CD4-positive, alpha-beta memory T cell (primary cell): ENCODE measurements at regions of chr12 and their contacts with region 1.

Region 1: DNA sequence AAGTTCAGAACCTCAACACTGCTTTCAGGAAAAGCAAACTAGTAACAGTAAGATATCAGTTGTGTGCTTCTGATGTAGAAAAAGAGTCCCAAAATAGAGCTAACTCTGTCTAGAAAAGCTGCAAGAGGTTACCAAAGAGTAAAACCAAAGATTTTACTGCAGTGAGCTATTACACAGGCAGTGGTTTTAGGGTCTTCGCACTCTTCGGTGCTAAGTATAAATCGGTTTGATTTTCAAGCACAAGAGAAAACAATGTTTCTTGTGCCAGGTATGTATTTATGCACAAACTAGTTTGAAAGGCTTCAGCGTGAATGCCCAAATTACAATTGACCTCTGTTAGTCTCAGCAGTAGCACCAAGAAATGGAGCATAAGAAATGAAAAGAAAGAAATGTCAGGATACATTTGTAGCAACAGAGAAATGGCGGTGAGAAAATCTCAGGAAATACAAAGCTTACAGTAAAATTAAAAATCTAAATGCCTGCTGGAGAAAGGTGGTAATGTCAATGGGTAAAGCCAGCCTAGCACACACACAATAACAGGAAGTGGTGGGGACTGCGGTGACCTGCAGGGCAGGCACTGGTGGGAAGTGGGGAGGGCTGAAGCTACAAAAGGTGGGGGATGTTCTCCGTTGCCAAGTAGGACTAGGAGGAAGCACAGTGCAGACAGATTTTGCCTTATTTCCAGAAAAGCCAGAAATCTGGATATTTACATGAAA is 18.0 kb upstream of the DYRK2 start:
- DNase-seq: peak; percentile 91 to 96 (median 92)
- H3K4me3 ChIP-seq: no peak overlapping the region
- H3K4me3 Mint-ChIP-seq: peak overlapping the region; percentile 61 to 88 (median 74)
- H3K27ac ChIP-seq: peak overlapping the region; percentile 43
- H3K27ac Mint-ChIP-seq: peak overlapping the region; percentile 87 to 96 (median 91)
- H3K4me1 ChIP-seq: peaks cover 84% of the 10 kb centered on the region
- H3K4me1 Mint-ChIP-seq: peaks cover 67 to 91% (median 82%) of the 10 kb centered on the region in 4 donors
- H3K27me3 ChIP-seq: no peaks in the 10 kb centered on the region
- H3K27me3 Mint-ChIP-seq: no peaks in the 10 kb centered on the region

Region 2: DNA sequence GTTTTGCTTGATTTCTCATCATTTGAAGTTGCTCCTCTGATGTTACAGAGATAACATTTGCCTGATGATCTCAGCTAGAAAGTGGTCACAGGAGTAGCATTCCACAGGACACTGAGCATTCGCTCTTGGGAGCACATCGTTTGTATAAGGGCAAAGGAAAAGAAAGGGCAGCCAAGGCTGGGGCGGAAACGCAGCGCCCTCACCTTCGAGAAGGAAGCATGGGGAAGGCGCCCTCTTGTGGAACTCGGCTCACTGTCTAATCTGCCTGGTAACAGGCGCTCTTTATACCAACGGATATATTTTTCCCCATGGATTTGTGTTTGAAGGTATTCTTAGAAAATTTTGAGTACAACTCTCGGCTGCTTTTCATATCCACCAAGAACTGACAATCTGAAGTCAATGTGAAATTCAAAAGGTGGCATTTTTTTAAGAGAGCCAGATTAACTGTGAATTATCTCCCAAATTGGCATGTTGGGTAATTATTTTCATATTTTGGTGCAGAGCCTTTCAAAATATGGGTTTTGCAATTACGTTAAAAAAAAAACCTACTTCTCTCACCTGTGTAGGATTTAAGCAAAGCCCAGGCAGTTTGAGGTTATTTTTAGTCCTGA is 188.7 kb before region 1 on chr12:
- CTCF ChIA-PET with region 1: interaction called, 8 read pairs
- POLR2A ChIA-PET with region 1: interaction called, 13 read pairs
- intact Hi-C with region 1: loop called (anchors 1 kb)
- DNase-seq: peak; percentile 68 to 79 (median 68)
- H3K4me3 ChIP-seq: no peak overlapping the region
- H3K4me3 Mint-ChIP-seq: peak overlapping the region; percentile 43 to 72 (median 68)
- H3K27ac ChIP-seq: no peak overlapping the region
- H3K27ac Mint-ChIP-seq: peak overlapping the region in 6 of 7 donors; percentile 10 to 86 (median 82)
- H3K4me1 ChIP-seq: peaks cover 12% of the 10 kb centered on the region
- H3K4me1 Mint-ChIP-seq: peaks cover 21 to 35% (median 27%) of the 10 kb centered on the region in 4 donors
- H3K27me3 ChIP-seq: no peaks in the 10 kb centered on the region
- H3K27me3 Mint-ChIP-seq: no peaks in the 10 kb centered on the region

Region 3: DNA sequence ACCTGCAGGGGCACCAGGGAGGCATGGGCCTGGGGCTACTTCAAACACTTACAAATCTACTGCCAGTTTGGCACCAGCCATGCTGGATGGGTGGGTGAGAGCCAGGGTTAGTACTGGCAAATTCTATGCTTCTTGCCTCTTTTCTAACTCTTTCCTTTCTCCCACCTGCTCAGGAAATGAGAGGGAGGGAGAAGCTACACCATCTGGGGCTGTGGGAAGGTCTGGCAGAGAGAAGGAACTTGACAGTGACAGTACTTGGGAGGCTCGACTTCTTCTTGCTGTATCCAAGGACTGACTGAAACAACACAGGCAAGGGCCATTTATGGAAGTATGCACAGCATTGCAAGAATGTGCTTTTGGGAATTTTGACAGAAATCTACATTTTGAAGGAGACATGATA is 131.5 kb before region 1 on chr12:
- CTCF ChIA-PET with region 1: interaction called, 4 read pairs
- POLR2A ChIA-PET with region 1: interaction called, 11 read pairs
- intact Hi-C with region 1: no loop called
- DNase-seq: no peak
- H3K4me3 ChIP-seq: no peak overlapping the region
- H3K4me3 Mint-ChIP-seq: no peak overlapping the region
- H3K27ac ChIP-seq: no peak overlapping the region
- H3K27ac Mint-ChIP-seq: no peak overlapping the region
- H3K4me1 ChIP-seq: peaks cover 8% of the 10 kb centered on the region
- H3K4me1 Mint-ChIP-seq: peaks cover 16 to 25% (median 23%) of the 10 kb centered on the region in 4 donors
- H3K27me3 ChIP-seq: no peaks in the 10 kb centered on the region
- H3K27me3 Mint-ChIP-seq: no peaks in the 10 kb centered on the region

Region 4: GRCh38 chr12:67578976-67579661 is 51.4 kb before region 1 on chr12:
- CTCF ChIA-PET with region 1: interaction called, 23 read pairs
- POLR2A ChIA-PET with region 1: interaction called, 75 read pairs
- intact Hi-C with region 1: loop called (anchors 1 kb)
- DNase-seq: peak; percentile 57 to 75 (median 66)
- H3K4me3 ChIP-seq: peak overlapping the region; percentile 2 to 8
- H3K4me3 Mint-ChIP-seq: peak overlapping the region in 7 of 8 donors; percentile 75 to 89 (median 79)
- H3K27ac ChIP-seq: no peak overlapping the region
- H3K27ac Mint-ChIP-seq: peak overlapping the region; percentile 55 to 89 (median 82)
- H3K4me1 ChIP-seq: peaks cover 49% of the 10 kb centered on the region
- H3K4me1 Mint-ChIP-seq: peaks cover 41 to 65% (median 50%) of the 10 kb centered on the region in 4 donors
- H3K27me3 ChIP-seq: no peaks in the 10 kb centered on the region
- H3K27me3 Mint-ChIP-seq: no peaks in the 10 kb centered on the region

Region 5: GRCh38 chr12:67592216-67593011 is 38.1 kb before region 1 on chr12:
- CTCF ChIA-PET with region 1: interaction called, 5 read pairs
- POLR2A ChIA-PET with region 1: interaction called, 31 read pairs
- intact Hi-C with region 1: loop called (anchors 1 kb)
- DNase-seq: peak in 4 of 5 donors; percentile 29 to 53 (median 44)
- H3K4me3 ChIP-seq: peak overlapping the region in 1 of 2 donors; percentile 25
- H3K4me3 Mint-ChIP-seq: peak overlapping the region in 7 of 8 donors; percentile 45 to 76 (median 69)
- H3K27ac ChIP-seq: no peak overlapping the region
- H3K27ac Mint-ChIP-seq: peak overlapping the region; percentile 33 to 93 (median 82)
- H3K4me1 ChIP-seq: peaks cover 55% of the 10 kb centered on the region
- H3K4me1 Mint-ChIP-seq: peaks cover 36 to 62% (median 50%) of the 10 kb centered on the region in 4 donors
- H3K27me3 ChIP-seq: no peaks in the 10 kb centered on the region
- H3K27me3 Mint-ChIP-seq: no peaks in the 10 kb centered on the region

Region 6: GRCh38 chr12:67943226-67943892 is 312.8 kb after region 1 on chr12:
- CTCF ChIA-PET with region 1: interaction called, 10 read pairs
- POLR2A ChIA-PET with region 1: interaction called, 3 read pairs
- intact Hi-C with region 1: no loop called
- DNase-seq: peak; percentile 62 to 71 (median 65)
- H3K4me3 ChIP-seq: no peak overlapping the region
- H3K4me3 Mint-ChIP-seq: no peak overlapping the region
- H3K27ac ChIP-seq: no peak overlapping the region
- H3K27ac Mint-ChIP-seq: peak overlapping the region in 1 of 7 donors; percentile 37
- H3K4me1 ChIP-seq: no peaks in the 10 kb centered on the region
- H3K4me1 Mint-ChIP-seq: peaks cover 3 to 5% (median 4%) of the 10 kb centered on the region in 4 donors
- H3K27me3 ChIP-seq: no peaks in the 10 kb centered on the region
- H3K27me3 Mint-ChIP-seq: peaks cover 1 to 2% of the 10 kb centered on the region in 2 donors